ENCODE measurements at regions of chr11 and their contacts with region 1.

Region 1: DNA sequence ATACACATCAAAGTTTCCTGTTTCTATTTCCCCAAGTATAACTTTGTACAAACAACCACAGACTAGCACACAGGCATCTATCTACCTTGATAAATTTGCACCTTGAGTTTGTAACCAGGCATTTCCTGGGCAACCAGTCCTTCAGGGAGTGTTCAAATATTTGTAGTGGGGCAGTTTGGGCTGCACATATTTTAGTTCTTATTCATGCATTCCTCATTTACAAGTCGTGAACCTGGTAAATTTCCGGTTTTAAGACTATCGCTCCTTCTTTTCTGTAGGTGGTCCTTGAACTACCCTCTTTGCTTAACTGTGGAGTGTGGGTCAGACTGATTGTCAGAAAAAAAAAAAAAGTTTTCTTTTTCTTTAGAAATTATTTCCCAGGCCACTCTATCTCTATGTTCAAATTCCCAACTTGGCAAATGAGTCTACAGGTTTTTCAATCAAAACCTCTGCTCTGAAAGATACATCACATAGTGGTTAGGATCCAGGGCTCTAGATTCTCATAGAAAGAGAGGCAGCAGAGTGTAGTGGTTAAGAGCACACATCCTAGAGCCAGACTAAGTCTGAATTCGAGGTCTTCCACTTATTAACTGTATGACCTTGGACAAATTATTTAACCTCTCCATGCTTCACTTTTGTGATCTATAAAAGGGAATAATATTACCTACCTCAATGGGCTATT is 201.5 kb downstream of the SOX6 start:
- DNase-seq: peak; percentile 69
- H3K4me3 Mint-ChIP-seq: peak overlapping the region; percentile 4
- H3K27ac Mint-ChIP-seq: no peak overlapping the region
- H3K4me1 Mint-ChIP-seq: peaks cover 12% of the 10 kb centered on the region
- H3K27me3 Mint-ChIP-seq: no peaks in the 10 kb centered on the region
- CTCF ChIP-seq: no peak

Region 2: DNA sequence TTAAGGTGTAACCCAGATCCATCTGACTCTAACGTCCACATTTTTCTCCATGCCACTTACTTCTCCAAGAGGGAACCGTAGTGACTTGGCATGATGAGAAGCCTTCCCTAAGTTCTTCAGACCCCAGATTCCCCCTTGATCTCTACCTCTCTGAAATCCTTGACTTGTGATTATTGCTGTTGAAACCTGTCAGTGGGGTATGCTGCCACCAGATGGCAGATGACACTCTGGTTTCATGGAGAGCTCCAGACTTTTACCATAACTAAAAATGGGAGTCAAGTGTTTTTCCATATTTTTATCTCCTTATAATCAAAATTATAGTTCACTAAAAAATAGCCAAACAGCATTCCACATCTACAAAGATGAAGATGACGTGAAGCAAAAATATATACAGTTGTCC is 302.7 kb before region 1 on chr11:
- CTCF ChIA-PET with region 1: no interaction called
- intact Hi-C with region 1: loop called (anchors 10 kb)
- DNase-seq: peak; percentile 42
- H3K4me3 Mint-ChIP-seq: no peak overlapping the region
- H3K27ac Mint-ChIP-seq: no peak overlapping the region
- H3K4me1 Mint-ChIP-seq: no peaks in the 10 kb centered on the region
- H3K27me3 Mint-ChIP-seq: no peaks in the 10 kb centered on the region
- CTCF ChIP-seq: peak; percentile 45

Region 3: DNA sequence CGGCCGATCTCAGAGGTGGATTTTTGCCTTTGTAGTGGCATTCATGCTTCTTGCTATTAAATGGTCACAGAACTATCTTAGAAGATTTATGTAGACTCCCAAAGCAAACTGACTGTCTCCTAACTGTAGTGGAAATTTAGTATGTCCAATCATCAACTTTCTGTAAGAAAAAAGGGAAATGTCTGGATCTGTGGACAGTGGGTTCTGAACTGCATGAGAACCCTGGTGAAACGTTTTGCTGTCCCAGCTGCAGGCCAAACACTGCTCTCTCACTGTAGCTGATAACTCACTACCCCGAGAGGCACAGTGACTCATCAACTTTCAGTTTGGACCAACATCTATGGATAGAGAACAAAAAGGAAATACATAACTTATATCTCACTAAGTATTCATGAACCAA is 185.6 kb before region 1 on chr11:
- CTCF ChIA-PET with region 1: no interaction called
- intact Hi-C with region 1: loop called (anchors 10 kb)
- DNase-seq: peak; percentile 56
- H3K4me3 Mint-ChIP-seq: peak overlapping the region; percentile 58
- H3K27ac Mint-ChIP-seq: peak overlapping the region; percentile 93
- H3K4me1 Mint-ChIP-seq: peaks cover 72% of the 10 kb centered on the region
- H3K27me3 Mint-ChIP-seq: no peaks in the 10 kb centered on the region
- CTCF ChIP-seq: no peak

Region 4: DNA sequence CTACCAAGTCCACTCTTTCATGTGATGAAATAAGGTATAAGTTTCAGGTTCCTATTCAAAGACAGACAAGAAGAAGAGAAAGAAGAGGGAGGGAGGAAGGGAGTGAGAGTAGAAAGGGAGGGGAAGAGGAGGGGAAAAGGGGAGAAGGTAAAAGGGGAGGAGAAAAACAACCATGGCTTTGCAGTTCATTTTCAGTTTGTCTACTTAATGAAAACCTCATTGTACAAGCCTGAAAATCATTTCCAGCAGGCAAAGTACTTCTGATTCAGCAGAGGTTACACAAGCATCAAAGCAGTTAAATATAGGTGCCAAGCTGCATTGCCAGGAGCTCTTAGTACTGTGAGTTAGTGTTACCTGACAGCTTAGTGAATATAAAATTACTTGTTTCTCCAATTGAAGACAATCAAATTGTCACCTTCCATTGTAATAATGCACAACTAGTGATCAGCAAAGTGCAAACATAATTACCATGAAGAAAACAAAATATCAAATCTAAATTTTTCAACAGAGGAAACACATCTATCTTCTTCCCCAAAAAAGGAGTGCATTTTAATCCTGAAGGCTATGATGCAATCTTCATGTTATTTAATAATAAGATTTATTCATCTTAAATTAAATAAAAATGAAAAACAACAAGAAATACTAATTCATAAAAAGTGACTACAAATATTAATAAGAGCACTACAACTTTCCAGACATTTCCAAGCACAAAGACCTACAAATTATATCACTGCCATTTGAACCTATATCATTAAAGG is 193.3 kb after region 1 on chr11:
- CTCF ChIA-PET with region 1: no interaction called
- intact Hi-C with region 1: no loop called
- DNase-seq: no peak
- H3K4me3 Mint-ChIP-seq: no peak overlapping the region
- H3K27ac Mint-ChIP-seq: no peak overlapping the region
- H3K4me1 Mint-ChIP-seq: no peaks in the 10 kb centered on the region
- H3K27me3 Mint-ChIP-seq: no peaks in the 10 kb centered on the region
- CTCF ChIP-seq: no peak